PC-3 (cell line): ENCODE measurements at regions of chr5 and their contacts with region 1.

Region 1: GRCh38 chr5:78677777-78678668 is 29.5 kb upstream of the LHFPL2 start:
- DNase-seq: peak; percentile 85
- ATAC-seq: peak; percentile 89
- H3K4me3 ChIP-seq: no peak overlapping the region
- H3K27ac ChIP-seq: peak overlapping the region; percentile 89
- H3K4me1 ChIP-seq: peaks cover 25% of the 10 kb centered on the region
- H3K27me3 ChIP-seq: no peaks in the 10 kb centered on the region
- CTCF ChIP-seq: no peak; the same call in 1 of the 2 replicates

Region 2: GRCh38 chr5:79284846-79285245 is 606.8 kb after region 1 on chr5:
- CTCF ChIA-PET with region 1: no interaction called
- POLR2A ChIA-PET with region 1: interaction called, 14 read pairs
- intact Hi-C with region 1: no loop called
- DNase-seq: no peak
- ATAC-seq: no peak
- H3K4me3 ChIP-seq: no peak overlapping the region
- H3K27ac ChIP-seq: no peak overlapping the region
- H3K4me1 ChIP-seq: no peaks in the 10 kb centered on the region
- H3K27me3 ChIP-seq: no peaks in the 10 kb centered on the region
- CTCF ChIP-seq: no peak